Posterior vena cava (tissue), 2 donors: ENCODE measurements at regions of chr10 and their contacts with region 1.

Region 1: DNA sequence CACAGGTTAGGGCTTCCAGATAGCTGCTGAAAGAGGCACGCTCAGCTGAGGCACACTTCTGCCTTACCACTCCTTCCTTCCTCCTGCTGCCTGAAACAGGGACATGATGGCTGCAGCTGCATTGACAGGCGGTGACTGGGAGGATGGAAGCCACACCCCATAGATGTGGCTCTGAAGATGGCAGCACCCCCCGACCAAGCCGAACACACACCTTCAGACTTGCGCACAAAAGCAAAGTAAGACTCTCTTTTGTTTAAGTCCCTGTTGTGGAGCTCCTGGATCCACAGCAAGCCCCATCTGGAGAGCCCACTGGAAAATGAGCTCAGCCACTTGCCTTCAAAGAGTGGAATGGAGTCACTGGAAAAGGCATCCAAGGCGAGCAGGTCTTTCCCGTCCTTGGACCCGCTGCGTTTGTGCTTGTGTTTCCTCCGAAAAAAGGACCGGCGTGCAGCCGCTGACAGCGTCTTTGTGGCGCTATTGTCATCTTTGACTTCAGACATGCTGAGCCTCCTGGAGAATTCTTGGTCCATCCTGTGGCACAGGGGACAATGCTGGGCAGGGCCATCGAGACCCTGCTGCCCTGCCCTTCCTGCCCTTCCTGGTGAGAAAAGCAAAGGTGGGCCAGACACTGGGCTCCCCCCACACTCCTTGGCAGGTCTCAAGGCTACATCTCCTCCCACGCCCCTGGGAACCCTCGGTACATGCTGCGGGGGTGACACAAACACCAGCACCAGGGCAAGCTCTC is 121.1 kb downstream of the DLG5 start:
- DNase-seq: peak; percentile 69

Region 2: GRCh38 chr10:77816311-77816710 is 10.8 kb after region 1 on chr10:
- intact Hi-C with region 1: loop called in 1 of 2 experiments (anchors 1 kb)
- DNase-seq: no peak